Activated CD4-positive, alpha-beta memory T cell treated with anti-CD3 and anti-CD28 coated beads, Interleukin-2, amount 10 ng/mL, durations not matched to agents 7 days and 5 days (primary cell): ENCODE measurements at regions of chr10 and their contacts with region 1.

Region 1: DNA sequence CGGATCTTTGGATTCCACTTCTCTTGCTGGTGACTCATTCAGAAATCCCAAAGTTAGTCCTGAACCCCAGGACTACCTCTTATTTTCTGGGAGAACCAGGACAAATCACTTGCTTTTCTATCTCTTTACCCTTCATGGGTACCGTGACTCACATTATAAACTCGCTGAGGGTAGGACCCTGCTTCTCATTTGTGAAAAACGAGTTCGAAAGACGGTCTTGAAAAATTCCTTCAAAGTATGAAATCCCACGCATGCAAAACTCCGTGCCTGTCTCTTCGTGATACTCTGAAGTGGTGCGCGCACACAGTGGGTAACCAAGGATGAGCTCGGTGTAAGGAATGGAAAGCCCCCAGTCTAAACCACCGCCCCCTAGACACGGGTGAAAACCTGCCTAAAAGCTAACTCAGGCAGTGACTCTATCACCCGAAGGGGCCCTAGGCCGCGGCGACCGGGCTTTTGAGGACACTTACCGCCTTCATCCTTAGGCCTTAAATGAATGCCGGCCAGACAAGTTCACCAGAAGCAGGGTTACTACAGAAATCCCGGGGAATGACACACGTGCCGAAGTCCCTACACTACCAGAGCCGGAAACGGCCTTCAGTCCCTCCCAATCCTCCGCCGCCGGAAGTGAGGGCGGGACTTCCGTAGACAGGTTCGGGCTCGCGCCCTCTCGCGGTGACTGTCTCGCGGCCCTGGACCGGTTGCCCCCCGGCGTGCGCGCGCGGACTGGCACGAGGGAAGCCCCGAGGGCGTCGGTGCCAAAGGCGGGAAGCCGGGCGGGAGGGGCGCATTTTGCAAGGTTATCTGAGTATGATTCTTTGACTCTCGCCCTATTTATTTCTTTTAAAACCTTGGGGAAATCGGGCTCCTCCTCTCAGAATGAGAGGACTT is at the start of gene NOC3L:
- DNase-seq: peak; percentile 94
- H3K4me3 Mint-ChIP-seq: peak within 1 kb of the TSS; percentile 96
- H3K27ac Mint-ChIP-seq: peak within 1 kb of the TSS; percentile 80
- H3K4me1 Mint-ChIP-seq: peaks cover 45% of the 10 kb centered on the region
- H3K27me3 Mint-ChIP-seq: peaks cover 14% of the 10 kb centered on the region
- total RNA-seq, gene NOC3L: 18.6 TPM

Region 2: GRCh38 chr10:94402015-94402842 is 39.6 kb after region 1 on chr10 and contains the start of gene TBC1D12:
- CTCF ChIA-PET with region 1: interaction called, 11 read pairs
- POLR2A ChIA-PET with region 1: interaction called, 3 read pairs
- DNase-seq: peak; percentile 36
- H3K4me3 Mint-ChIP-seq: peak within 1 kb of the TSS; percentile 72
- H3K27ac Mint-ChIP-seq: no peak within 1 kb of the TSS
- H3K4me1 Mint-ChIP-seq: peaks cover 8% of the 10 kb centered on the region
- H3K27me3 Mint-ChIP-seq: peaks cover 59% of the 10 kb centered on the region
- total RNA-seq, gene TBC1D12: 0.28 to 0.30 TPM